ENCODE measurements at regions of chr18 and their contacts with region 1.

Region 1: DNA sequence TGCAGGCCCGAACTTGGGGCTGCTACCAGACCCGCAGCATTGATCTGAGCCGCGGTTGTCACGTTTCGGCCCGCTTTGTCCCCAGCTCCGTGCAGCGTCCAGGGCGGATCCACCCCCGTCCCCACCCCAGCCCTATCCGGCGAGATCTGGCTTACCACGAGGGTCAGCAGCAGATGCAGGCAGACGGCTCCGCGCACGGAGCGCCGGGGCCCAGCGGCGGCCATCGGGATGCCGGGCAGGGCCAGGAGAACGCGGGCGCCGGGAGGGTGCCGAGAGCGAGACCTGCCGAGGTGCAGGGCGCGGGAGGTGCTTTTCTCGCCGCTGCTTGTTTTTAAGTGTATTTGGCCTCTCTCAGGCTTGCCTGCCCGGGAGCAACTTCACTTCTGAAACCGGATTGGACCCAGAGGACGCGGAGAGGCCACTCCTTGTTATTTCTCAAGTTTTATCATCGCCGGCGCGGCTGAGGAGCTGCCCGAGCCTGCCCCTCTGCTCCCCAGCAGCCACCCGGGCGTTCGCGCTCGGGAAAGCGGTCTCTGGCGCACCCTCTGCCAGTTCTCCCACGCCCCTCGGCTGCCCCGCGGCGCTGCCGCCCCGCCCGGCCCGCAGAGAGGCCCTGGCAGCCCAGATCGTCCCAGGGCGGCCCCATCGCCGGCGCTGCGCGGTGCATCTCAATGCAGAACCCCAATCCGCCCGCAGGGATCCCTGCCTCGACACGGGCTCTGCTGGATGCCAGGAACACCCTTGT is at the start of gene DSC3:
- DNase-seq: peak in 1 of 5 donors; percentile 14
- H3K4me3 ChIP-seq: peak within 1 kb of the TSS; percentile 18
- H3K27ac ChIP-seq: no peak within 1 kb of the TSS
- H3K4me1 ChIP-seq: no peaks in the 10 kb centered on the region
- H3K27me3 ChIP-seq: peaks cover 2% of the 10 kb centered on the region
- CTCF ChIP-seq: no peak
- EP300 ChIP-seq: no peak
- POLR2A ChIP-seq: no peak
- total RNA-seq, gene DSC3: 0.05 to 9.1 (median 0.38) TPM

Region 2: GRCh38 chr18:30987450-30988241 is 55.0 kb before region 1 on chr18:
- intact Hi-C with region 1: loop called in 1 of 4 experiments (anchors 10 kb)
- DNase-seq: no peak
- H3K4me3 ChIP-seq: no peak overlapping the region
- H3K27ac ChIP-seq: no peak overlapping the region
- H3K4me1 ChIP-seq: no peaks in the 10 kb centered on the region
- H3K27me3 ChIP-seq: no peaks in the 10 kb centered on the region
- CTCF ChIP-seq: no peak
- EP300 ChIP-seq: no peak
- POLR2A ChIP-seq: no peak

Region 3: GRCh38 chr18:31112804-31113203 is 70.2 kb after region 1 on chr18:
- intact Hi-C with region 1: no loop called
- DNase-seq: no peak
- H3K4me3 ChIP-seq: no peak overlapping the region
- H3K27ac ChIP-seq: no peak overlapping the region
- H3K4me1 ChIP-seq: no peaks in the 10 kb centered on the region
- H3K27me3 ChIP-seq: no peaks in the 10 kb centered on the region
- CTCF ChIP-seq: no peak
- EP300 ChIP-seq: no peak
- POLR2A ChIP-seq: no peak

Region 4: GRCh38 chr18:31760695-31761094 is 718.1 kb after region 1 on chr18 and contains the start of gene SLC25A52:
- intact Hi-C with region 1: no loop called
- DNase-seq: peak in 1 of 5 donors; percentile 12
- H3K4me3 ChIP-seq: no peak within 1 kb of the TSS
- H3K27ac ChIP-seq: no peak within 1 kb of the TSS
- H3K4me1 ChIP-seq: no peaks in the 10 kb centered on the region
- H3K27me3 ChIP-seq: no peaks in the 10 kb centered on the region
- CTCF ChIP-seq: no peak
- EP300 ChIP-seq: no peak
- POLR2A ChIP-seq: no peak
- total RNA-seq, gene SLC25A52: not detected